ENCODE measurements at regions of chr6 and their contacts with region 1.

Region 1: GRCh38 chr6:20340068-20340848 is 61.4 kb upstream of the E2F3 start:
- DNase-seq: no peak
- H3K4me3 ChIP-seq: no peak overlapping the region
- H3K27ac ChIP-seq: no peak overlapping the region
- H3K4me1 ChIP-seq: no peaks in the 10 kb centered on the region
- H3K27me3 ChIP-seq: no peaks in the 10 kb centered on the region
- CTCF ChIP-seq: no peak

Region 2: GRCh38 chr6:19976411-19977129 is 363.7 kb before region 1 on chr6:
- intact Hi-C with region 1: loop called (anchors 10 kb)
- DNase-seq: no peak
- H3K4me3 ChIP-seq: no peak overlapping the region
- H3K27ac ChIP-seq: no peak overlapping the region
- H3K4me1 ChIP-seq: no peaks in the 10 kb centered on the region
- H3K27me3 ChIP-seq: no peaks in the 10 kb centered on the region
- CTCF ChIP-seq: no peak

Region 3: DNA sequence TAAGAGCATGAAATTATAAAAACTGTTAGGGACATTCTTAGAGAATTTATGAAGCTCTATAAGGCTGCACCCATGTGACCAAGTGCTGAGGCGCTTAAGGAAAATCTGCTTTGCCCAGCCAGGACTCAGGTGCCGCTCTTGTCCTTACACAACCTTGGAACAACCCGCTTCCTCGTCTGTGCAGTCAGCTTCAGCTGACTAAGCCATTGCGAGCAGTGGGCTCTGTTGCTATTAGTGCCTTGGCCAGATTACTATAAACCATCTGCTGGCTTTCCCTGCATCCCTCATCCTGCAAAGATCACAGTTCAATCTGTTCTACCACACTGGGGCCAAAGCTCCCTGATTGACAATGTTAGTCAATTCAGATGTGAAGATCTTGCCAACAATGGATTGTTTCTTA is 27.7 kb before region 1 on chr6:
- intact Hi-C with region 1: no loop called
- DNase-seq: no peak
- H3K4me3 ChIP-seq: no peak overlapping the region
- H3K27ac ChIP-seq: no peak overlapping the region
- H3K4me1 ChIP-seq: no peaks in the 10 kb centered on the region
- H3K27me3 ChIP-seq: peaks cover 0 to 16% of the 10 kb centered on the region in 2 donors
- CTCF ChIP-seq: no peak

Region 4: GRCh38 chr6:20366091-20366832 is 26.0 kb after region 1 on chr6:
- intact Hi-C with region 1: no loop called
- DNase-seq: no peak
- H3K4me3 ChIP-seq: no peak overlapping the region
- H3K27ac ChIP-seq: no peak overlapping the region
- H3K4me1 ChIP-seq: no peaks in the 10 kb centered on the region
- H3K27me3 ChIP-seq: no peaks in the 10 kb centered on the region
- CTCF ChIP-seq: no peak

Measured in tibial artery (tissue), 4 donors.